ENCODE measurements at regions of chr17 and their contacts with region 1.

Region 1: GRCh38 chr17:70552230-70552981 is 383.1 kb downstream of the KCNJ2 start:
- DNase-seq: no peak
- H3K4me3 ChIP-seq: no peak overlapping the region
- H3K27ac ChIP-seq: no peak overlapping the region
- H3K27me3 ChIP-seq: peaks cover 2% of the 10 kb centered on the region
- CTCF ChIP-seq: peak; percentile 51

Region 2: DNA sequence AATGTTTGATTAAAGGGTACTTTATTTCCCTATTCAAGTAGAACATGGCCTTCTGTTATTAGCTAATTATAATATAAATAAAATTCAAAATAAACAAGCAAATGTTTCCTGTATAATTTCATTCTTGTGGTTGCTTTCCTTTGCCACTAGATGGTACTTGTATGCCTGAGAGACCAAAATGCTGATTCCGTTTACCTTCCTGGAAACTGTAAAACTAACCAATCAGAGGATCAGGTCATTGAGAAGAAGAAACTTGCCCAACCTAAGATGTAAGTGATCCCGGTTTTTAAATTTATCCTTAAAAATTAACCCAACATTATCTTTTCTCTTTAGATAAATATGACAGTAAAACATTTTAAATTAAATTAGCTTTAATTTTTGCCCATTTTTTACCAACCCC is 1217.3 kb before region 1 on chr17:
- CTCF ChIA-PET with region 1: interaction called, 15 read pairs
- POLR2A ChIA-PET with region 1: no interaction called
- DNase-seq: no peak
- H3K4me3 ChIP-seq: no peak overlapping the region
- H3K27ac ChIP-seq: no peak overlapping the region
- H3K27me3 ChIP-seq: no peaks in the 10 kb centered on the region
- CTCF ChIP-seq: peak; percentile 49

Region 3: GRCh38 chr17:69547947-69548346 is 1004.5 kb before region 1 on chr17:
- CTCF ChIA-PET with region 1: interaction called, 12 read pairs
- POLR2A ChIA-PET with region 1: no interaction called
- DNase-seq: no peak
- H3K4me3 ChIP-seq: no peak overlapping the region
- H3K27ac ChIP-seq: no peak overlapping the region
- H3K27me3 ChIP-seq: no peaks in the 10 kb centered on the region
- CTCF ChIP-seq: no peak

Region 4: GRCh38 chr17:69567130-69567529 is 985.3 kb before region 1 on chr17:
- CTCF ChIA-PET with region 1: interaction called, 38 read pairs
- POLR2A ChIA-PET with region 1: no interaction called
- DNase-seq: no peak
- H3K4me3 ChIP-seq: no peak overlapping the region
- H3K27ac ChIP-seq: no peak overlapping the region
- H3K27me3 ChIP-seq: no peaks in the 10 kb centered on the region
- CTCF ChIP-seq: no peak

Region 5: GRCh38 chr17:70499067-70499786 is 53.2 kb before region 1 on chr17:
- CTCF ChIA-PET with region 1: interaction called, 12 read pairs
- POLR2A ChIA-PET with region 1: no interaction called
- DNase-seq: no peak
- H3K4me3 ChIP-seq: no peak overlapping the region
- H3K27ac ChIP-seq: no peak overlapping the region
- H3K27me3 ChIP-seq: no peaks in the 10 kb centered on the region
- CTCF ChIP-seq: no peak

Region 6: DNA sequence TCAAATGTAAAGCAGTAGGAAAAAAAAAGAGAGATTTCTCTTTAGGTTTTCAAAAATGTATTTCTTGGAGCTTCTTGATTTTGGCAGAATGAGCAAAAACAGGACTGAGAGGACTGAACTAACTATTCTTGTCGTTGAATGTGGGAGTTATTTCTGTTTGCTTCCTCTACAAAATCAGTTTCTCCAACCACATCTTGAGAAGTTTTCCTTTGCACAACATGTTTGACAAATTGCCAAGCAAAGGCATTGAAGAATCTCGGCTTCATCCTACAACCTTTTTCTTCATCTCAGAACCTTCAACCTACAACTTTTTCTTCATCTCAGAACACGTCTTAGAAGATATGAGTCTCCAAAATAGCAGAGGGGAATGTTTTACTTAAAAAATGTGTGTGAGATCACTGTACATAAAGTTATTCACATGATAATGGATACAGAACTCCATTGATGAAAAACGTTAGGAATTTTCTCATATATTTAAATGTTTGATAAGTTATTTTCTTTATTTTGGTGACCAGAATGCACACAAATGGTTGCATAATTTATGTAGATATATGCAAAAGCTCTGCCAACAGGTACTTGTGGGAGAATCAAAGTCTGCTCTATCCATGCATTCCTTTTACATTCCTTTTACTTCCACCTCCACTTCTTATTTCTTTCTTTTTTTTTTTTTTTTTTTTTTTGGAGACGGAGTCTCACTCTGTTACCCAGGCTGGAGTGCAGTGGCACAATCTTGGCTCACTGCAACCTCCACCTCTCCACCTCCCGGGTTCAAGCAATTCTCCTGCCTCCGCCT is 13.1 kb before region 1 on chr17:
- CTCF ChIA-PET with region 1: interaction called, 12 read pairs
- POLR2A ChIA-PET with region 1: no interaction called
- DNase-seq: no peak
- H3K4me3 ChIP-seq: no peak overlapping the region
- H3K27ac ChIP-seq: no peak overlapping the region
- H3K27me3 ChIP-seq: no peaks in the 10 kb centered on the region
- CTCF ChIP-seq: no peak

Region 7: GRCh38 chr17:70655176-70655958 is 103.0 kb after region 1 on chr17:
- CTCF ChIA-PET with region 1: no interaction called
- POLR2A ChIA-PET with region 1: no interaction called
- DNase-seq: no peak
- H3K4me3 ChIP-seq: no peak overlapping the region
- H3K27ac ChIP-seq: no peak overlapping the region
- H3K27me3 ChIP-seq: no peaks in the 10 kb centered on the region
- CTCF ChIP-seq: no peak

Region 8: DNA sequence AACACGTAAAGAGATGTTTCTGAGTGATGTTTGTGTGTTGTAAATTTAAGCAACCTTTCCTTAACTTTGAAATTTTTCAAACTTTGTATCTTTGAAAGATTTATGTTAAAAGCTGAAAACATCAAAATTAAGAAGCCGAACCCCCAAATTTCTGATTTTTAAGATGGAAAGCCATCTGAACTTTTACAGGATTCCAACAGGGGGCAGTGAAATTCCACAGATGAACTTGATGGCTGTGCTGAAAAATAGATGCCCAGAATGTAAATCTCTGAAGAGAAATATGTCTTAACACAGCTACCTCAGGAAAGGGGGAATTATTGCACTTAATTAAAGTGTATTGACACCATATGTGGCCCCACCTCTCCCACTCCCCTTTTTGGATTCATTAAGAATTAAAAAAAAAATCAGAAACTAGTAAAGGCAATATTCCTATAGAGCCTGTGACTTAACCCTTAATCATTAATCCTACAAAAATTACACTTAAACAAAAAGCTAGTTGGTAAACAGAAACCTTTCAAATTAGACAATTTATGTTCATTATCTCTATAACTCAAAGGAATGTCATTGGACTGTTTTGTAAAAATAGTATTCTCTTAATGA is 214.8 kb after region 1 on chr17:
- CTCF ChIA-PET with region 1: no interaction called
- POLR2A ChIA-PET with region 1: no interaction called
- DNase-seq: peak; percentile 3
- H3K4me3 ChIP-seq: no peak overlapping the region
- H3K27ac ChIP-seq: no peak overlapping the region
- H3K27me3 ChIP-seq: no peaks in the 10 kb centered on the region
- CTCF ChIP-seq: peak; percentile 84